Cardiac septum (tissue), 1 donor: ENCODE measurements at regions of chr17 and their contacts with region 1.

Region 1: DNA sequence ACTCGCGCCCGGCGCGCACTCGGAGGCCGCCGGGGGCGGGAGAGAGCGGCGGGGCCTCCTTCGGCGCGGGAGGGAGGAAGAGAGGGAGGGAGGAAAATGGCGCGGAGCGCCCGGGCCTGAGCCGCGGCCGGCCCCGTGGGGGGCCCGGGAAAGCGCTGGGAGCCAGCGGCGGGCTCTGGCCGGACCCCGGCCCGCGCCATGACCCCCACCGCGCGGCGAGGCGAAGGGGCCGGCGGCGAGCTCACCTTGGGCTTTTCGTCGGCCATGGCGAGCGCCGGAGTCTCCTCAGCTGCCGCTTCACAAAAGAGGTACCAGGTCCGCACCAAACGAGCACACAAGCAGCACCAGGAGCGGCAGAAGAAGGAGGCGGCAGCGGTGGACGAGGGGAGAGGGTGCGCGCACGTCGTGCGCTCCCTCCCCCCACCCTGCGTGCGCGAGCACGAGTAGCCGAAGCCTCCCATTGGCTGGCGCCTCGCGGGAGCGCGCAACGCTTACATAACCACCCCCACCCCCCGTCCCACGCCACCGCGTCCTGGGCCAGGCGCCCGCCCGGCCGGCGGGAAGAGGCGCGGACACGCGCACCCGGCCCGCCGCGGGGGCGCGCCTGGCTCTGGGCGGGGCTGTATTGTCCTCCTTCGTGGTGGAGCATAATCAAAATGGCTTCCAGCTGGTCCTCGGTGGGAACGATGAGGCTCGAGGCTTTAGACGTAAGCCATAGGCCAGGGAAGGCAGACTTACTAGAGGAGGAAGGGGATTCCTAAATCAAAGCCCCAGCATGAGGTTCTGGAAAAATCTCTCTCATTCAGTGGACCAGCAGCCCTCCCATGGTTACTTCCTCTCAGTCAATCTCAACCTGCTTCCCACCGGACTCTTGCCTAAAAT is at the start of gene SUMO2:
- DNase-seq: peak; percentile 96
- total RNA-seq, gene SUMO2: 214 TPM

Region 2: DNA sequence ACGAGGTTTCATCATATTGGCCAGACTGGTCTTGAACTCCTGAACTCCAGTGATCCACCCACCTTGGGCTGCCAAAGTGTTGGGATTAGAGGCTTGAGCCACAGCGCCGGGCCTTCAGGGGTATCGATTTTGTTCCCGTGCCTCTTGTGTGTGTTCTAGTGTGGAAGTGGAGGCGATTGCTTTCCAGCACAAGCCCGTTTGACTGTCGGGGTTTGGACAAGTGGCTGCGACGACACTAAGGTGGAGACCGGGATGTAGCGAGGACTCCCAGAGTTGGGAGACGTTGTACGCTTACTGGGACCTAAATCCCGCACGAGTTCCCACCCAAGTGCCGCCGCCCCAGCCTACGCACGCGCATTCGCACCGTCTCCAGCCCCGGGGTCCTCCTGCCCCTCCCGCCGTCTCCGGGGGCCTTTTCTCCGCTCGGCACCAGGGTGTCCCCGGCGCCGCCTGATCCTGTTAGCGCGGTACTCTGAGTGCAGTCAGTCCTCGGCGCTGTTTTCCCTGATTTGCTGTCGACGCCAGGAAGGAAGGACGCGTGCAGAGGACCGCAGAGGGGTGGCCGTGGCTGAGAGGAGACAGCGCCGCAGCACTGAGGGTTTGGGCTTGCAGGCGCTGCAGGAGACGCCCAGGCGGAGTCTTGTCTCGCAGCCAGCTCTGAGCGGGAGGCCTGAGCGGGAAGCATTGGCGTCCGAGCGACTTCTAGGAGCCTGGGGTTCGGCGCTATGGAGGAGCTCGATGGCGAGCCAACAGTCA is 22.4 kb after region 1 on chr17 and contains the start of gene NUP85:
- intact Hi-C with region 1: loop called (anchors 1 kb)
- DNase-seq: peak; percentile 97
- total RNA-seq, gene NUP85: 26.3 TPM

Region 3: DNA sequence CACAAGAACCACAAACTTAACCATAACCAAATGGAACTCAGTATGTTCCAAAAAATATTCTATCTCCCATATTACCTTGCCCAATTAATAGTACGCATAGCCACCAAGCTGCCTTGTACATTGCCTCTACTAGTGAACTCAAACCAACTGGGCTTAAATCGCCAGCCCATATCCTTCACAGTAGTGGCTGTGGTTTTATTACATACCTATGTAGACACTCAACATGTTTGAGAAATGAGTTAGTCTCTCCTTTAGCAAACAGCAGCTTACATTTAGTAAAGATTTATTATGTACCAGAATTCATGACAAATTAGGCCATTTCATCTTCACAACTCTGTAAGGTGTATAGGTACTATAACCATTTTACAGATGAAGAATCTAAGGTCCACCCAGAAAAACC is 181.3 kb after region 1 on chr17:
- intact Hi-C with region 1: no loop called
- DNase-seq: no peak

Region 4: DNA sequence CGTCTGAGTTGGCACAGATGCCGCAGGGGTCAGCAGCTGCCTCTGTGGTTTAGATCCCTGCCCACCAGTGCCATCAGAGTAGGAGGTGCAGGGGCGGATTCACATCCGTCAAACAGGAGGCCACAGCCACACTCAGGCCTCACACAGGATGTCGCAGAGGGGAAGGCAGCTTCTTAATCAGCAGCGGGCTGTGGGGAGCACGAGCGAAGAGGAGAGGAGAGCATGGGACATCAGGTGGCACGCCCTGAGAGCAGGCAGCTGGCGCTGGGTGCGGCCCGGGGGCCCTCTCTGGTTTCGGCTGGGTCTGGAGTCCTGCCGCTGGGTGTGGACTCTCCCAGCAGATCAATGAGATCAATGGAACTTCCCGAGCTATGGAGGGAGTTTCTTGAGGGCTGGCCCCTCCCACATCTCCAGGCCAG is 352.3 kb after region 1 on chr17:
- intact Hi-C with region 1: no loop called
- DNase-seq: no peak